PC-3 (cell line): ENCODE measurements at regions of chr7 and their contacts with region 1.

Region 1: DNA sequence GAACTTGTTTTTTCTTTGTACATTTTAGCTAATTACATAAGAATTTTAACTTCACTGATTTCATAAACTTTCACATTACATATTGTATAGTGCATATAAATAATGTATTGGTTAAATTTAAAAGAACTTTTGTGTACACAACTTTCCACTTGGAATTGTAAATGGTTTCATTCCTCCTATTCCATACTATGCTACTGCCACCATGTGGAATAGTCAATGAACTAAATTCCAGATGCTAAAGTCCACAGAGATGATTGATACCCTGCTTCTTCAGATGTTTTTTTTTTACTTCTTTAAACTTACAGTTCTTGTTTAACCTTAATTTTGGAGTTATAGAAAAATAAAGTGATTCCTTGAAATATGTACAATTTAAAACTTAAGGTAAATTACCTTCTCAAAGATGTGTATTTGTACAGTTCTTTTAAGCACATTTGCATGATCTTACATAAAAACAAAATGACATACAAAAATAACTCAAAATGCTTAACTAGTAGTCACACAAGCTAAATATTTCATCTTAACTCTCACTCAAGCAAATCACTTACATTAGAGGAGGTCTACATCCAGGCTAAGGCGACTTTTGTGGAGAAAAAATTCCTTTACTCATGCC is 247.6 kb upstream of the HGF start:
- DNase-seq: peak; percentile 57
- ATAC-seq: peak; percentile 65
- H3K4me3 ChIP-seq: no peak overlapping the region
- H3K27ac ChIP-seq: no peak overlapping the region
- H3K4me1 ChIP-seq: peaks cover 13% of the 10 kb centered on the region
- H3K27me3 ChIP-seq: no peaks in the 10 kb centered on the region
- CTCF ChIP-seq: peak; percentile 73

Region 2: GRCh38 chr7:81482600-81483186 is 534.7 kb before region 1 on chr7:
- CTCF ChIA-PET with region 1: no interaction called
- POLR2A ChIA-PET with region 1: no interaction called
- intact Hi-C with region 1: loop called (anchors 1 kb)
- DNase-seq: peak; percentile 55
- ATAC-seq: peak; percentile 49; the same call in 1 of the 2 replicates
- H3K4me3 ChIP-seq: no peak overlapping the region
- H3K27ac ChIP-seq: no peak overlapping the region
- H3K4me1 ChIP-seq: 0 out of 2 replicates have a peak, but pooled peaks cover 4% of the 10 kb centered on the region
- H3K27me3 ChIP-seq: no peaks in the 10 kb centered on the region
- CTCF ChIP-seq: peak; percentile 70

Region 3: DNA sequence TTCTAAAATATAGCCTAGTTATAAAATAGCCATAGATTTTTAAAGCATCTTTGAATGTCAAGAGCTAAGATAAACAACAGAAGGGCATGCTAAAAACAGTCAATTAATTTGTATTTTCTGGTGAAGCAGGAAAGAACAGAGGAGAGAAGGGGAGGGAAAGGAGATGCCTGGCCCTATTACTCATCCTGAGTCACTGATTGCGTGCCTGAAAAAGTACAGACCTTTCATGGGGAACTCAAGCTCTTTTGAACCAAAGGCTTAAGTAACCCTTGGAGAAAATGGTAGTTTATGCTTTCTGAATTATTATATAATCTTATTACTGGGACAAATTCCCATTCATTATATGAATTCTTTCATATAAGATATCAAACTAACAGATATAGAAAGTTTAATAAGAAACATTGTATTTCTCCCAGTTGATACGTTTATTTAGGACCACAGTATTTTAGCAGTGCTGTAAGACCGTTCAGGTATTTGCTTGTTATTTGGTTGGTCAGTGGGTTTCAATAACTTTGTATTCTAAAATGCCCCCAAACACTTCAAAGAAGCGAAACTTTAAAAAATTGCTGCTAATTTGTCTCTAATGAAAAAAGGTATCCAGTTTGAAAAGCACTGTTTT is 398.9 kb before region 1 on chr7:
- CTCF ChIA-PET with region 1: no interaction called
- POLR2A ChIA-PET with region 1: no interaction called
- intact Hi-C with region 1: loop called (anchors 5 kb)
- DNase-seq: peak; percentile 90
- ATAC-seq: peak; percentile 86
- H3K4me3 ChIP-seq: no peak overlapping the region
- H3K27ac ChIP-seq: peak overlapping the region; percentile 94
- H3K4me1 ChIP-seq: peaks cover 38% of the 10 kb centered on the region
- H3K27me3 ChIP-seq: no peaks in the 10 kb centered on the region
- CTCF ChIP-seq: no peak

Region 4: DNA sequence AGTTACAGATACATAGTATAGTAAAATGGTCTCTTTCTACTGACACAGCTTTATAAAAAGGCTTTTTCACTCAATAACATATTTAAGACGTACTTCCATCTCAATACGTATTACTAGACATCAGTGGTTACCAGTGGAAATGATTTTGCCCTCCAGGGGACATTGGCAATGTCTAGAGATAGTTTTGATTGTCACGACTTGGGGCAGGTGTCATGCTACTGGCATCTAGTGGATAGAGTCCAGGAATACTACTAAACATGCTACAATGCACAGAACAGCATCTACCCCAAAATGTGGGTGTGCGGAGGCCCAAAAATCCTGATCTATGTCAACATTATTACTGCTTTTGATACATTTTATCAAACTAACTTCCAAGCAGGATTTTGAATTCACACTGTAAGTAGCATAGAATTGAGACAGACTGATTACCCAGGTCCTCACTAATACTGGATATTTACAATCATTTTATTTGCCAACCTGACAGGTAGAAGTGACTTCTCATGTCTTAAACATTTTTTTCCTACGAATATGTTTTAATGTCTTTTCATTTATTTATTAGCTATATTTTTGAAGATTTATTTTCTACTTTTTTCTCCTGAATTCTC is 301.4 kb before region 1 on chr7:
- CTCF ChIA-PET with region 1: no interaction called
- POLR2A ChIA-PET with region 1: no interaction called
- intact Hi-C with region 1: loop called (anchors 1 kb)
- DNase-seq: peak; percentile 83
- ATAC-seq: peak; percentile 99
- H3K4me3 ChIP-seq: peak overlapping the region; percentile 39
- H3K27ac ChIP-seq: peak overlapping the region; percentile 68
- H3K4me1 ChIP-seq: peaks cover 13% of the 10 kb centered on the region; the same call in 1 of the 2 replicates
- H3K27me3 ChIP-seq: no peaks in the 10 kb centered on the region
- CTCF ChIP-seq: peak; percentile 90

Region 5: DNA sequence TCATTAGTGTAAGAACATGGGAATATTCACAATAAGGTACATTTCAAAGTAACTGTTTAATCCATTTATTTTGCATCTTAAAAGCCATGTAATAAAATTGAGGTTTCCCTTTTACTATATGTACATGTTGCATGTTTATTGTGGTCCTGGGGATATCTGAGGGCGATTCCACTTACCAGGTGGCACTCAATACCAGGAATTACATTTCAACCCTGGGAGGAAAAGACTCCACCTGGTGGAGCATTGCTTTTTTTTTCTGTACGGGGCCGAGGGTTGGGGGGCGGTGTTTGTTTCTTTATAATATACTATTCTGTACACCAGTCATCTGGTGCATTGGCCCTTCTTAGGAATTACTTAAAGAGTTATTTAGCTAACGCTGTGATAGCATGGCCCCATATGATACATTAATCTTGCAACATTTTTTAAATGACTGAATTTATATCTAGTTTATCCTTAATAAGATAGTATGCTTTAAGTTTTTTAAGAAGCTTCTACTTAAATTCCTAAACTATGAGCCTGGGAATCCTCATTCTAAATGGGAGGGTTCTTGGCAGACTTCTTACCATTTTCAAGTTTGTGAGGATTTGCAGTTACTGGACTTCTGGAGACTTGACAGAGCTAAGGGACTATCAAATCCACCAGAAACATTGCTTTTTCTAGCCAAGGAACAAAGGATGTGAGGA is 240.3 kb before region 1 on chr7:
- CTCF ChIA-PET with region 1: no interaction called
- POLR2A ChIA-PET with region 1: no interaction called
- intact Hi-C with region 1: loop called (anchors 5 kb)
- DNase-seq: peak; percentile 22
- ATAC-seq: peak; percentile 42; the same call in 1 of the 2 replicates
- H3K4me3 ChIP-seq: no peak overlapping the region
- H3K27ac ChIP-seq: no peak overlapping the region
- H3K4me1 ChIP-seq: no peaks in the 10 kb centered on the region
- H3K27me3 ChIP-seq: no peaks in the 10 kb centered on the region
- CTCF ChIP-seq: peak; percentile 61

Region 6: DNA sequence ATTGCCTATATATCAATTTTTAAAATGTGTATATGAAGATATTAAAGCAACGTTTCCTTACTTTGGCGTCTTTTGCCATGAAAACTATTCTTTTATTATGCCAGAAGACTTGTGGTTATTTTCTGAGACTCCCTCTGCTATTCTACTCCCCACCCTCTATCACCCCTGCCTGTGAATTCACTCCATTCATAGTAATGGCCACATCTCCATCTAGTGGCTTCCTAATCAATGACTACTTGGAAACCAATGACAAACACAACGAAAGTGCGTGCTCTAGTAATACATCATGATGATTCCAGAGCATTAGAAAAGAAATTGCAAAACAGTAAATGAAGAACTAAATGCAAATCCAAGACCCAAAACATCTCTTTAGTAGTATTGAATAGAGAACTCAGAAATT is 60.9 kb before region 1 on chr7:
- CTCF ChIA-PET with region 1: no interaction called
- POLR2A ChIA-PET with region 1: no interaction called
- intact Hi-C with region 1: loop called (anchors 2 kb)
- DNase-seq: peak; percentile 68
- ATAC-seq: peak; percentile 74
- H3K4me3 ChIP-seq: no peak overlapping the region
- H3K27ac ChIP-seq: no peak overlapping the region
- H3K4me1 ChIP-seq: no peaks in the 10 kb centered on the region
- H3K27me3 ChIP-seq: peaks cover 3% of the 10 kb centered on the region; the same call in 1 of the 2 replicates
- CTCF ChIP-seq: peak; percentile 81